ENCODE measurements at regions of chr12 and their contacts with region 1.

Region 1: DNA sequence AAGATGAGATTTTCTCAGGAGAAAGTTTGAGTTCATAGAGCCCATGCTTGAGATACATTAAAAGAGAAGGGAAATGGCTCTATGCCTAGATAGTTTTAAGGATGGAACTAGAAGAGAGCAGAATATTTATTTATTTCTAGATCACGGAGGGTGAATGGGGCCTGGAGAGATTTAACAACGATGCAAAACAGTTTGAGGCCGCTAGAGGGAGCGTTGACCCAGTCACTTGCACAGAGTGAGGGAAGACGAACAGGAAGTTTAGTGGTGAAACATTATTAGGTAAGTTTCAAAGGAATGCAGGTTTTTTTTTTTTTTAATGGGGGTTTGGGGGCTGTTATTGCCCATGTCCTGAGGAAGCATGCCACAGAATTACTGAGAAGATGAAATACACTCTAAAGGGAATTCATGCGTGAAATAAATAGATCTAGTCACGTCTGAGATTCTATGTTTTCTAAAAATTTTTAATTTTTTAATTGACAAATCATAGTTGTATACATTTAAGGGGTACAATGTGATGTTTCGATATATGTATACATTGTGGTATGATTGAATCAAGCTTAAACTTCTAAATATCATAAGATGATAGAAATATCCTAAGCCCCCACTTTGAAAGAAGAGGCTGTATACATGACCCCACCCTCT is 14.8 kb upstream of the PPP1R1A start:
- DNase-seq: peak; percentile 76
- H3K4me3 Mint-ChIP-seq: no peak overlapping the region
- H3K27ac Mint-ChIP-seq: no peak overlapping the region
- H3K4me1 Mint-ChIP-seq: peaks cover 8% of the 10 kb centered on the region
- H3K27me3 Mint-ChIP-seq: peaks cover 55% of the 10 kb centered on the region
- CTCF ChIP-seq: peak; percentile 59

Region 2: DNA sequence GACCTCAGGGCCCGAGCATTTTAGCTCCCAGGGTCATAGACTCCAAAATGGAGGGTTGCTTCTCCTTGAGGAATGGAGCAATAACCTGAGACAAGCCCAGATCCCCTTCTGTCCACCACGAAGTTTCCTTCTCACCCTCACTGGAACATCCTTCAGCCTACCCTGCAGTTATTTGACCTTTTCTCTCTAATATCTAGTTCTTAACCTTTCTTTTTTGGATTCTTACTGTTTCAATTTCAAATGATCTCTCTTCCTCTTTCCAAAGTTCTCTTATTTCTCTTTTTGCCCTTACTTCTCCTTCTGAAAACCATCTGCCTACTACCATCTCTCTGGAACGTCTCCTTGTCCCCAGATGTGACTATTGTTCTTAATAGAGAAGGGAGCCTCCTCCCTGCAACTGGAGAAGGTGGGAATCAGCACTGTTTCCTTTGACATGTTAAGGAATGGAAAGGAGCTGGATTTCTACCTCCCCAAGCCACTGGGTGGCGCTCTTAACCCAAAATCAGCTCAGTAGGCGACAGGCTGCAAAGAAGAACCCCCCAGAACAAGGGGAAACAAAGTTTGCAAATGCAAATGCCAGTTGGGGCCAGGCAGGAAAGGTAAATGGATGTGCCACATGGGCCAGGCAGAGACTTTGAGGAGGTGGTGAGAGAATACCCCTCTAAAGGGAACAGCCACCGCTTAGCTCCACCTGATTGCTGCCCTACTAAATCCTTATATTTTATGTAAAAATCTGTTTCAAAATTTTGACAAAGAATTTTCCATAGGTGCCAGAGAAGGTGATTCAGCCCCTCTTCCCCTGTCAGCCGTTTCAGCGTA is 76.3 kb before region 1 on chr12:
- CTCF ChIA-PET with region 1: no interaction called
- intact Hi-C with region 1: no loop called
- DNase-seq: peak; percentile 54
- H3K4me3 Mint-ChIP-seq: no peak overlapping the region
- H3K27ac Mint-ChIP-seq: no peak overlapping the region
- H3K4me1 Mint-ChIP-seq: no peaks in the 10 kb centered on the region
- H3K27me3 Mint-ChIP-seq: peaks cover 100% of the 10 kb centered on the region
- CTCF ChIP-seq: peak; percentile 36

Region 3: DNA sequence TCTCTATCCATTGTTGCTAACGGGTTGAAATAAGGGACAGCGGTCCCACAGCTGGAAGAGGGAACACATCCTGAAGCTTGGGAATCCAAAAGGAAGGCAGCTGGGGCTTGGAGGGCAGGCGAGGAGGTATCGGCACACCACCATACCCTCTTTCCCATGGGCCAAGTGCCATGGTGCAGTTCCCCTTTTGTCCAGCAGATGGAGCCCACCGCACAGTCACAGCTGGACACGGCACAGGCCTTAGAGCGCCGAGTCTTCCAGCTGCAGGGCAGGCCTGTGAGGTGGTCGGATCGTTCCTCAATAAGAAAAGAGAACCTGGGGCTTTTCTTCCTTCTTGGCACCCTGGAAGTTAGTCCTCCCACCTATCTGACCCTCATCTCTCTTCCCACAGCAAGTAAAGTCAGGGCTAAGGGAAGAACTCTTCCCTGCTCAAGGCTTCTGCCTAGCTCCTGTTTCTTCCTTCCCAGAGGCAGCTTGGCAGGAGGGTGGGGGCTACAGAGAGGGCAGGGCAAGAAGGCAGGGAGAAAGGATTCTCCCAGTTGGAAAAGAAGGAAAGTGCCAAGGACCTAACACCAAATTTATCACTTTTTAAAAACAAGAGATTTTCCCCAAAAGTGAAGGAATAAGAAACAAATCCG is 23.5 kb before region 1 on chr12:
- CTCF ChIA-PET with region 1: no interaction called
- intact Hi-C with region 1: loop called (anchors 2 kb)
- DNase-seq: peak; percentile 92
- H3K4me3 Mint-ChIP-seq: no peak overlapping the region
- H3K27ac Mint-ChIP-seq: no peak overlapping the region
- H3K4me1 Mint-ChIP-seq: no peaks in the 10 kb centered on the region
- H3K27me3 Mint-ChIP-seq: peaks cover 100% of the 10 kb centered on the region
- CTCF ChIP-seq: peak; percentile 99

Region 4: DNA sequence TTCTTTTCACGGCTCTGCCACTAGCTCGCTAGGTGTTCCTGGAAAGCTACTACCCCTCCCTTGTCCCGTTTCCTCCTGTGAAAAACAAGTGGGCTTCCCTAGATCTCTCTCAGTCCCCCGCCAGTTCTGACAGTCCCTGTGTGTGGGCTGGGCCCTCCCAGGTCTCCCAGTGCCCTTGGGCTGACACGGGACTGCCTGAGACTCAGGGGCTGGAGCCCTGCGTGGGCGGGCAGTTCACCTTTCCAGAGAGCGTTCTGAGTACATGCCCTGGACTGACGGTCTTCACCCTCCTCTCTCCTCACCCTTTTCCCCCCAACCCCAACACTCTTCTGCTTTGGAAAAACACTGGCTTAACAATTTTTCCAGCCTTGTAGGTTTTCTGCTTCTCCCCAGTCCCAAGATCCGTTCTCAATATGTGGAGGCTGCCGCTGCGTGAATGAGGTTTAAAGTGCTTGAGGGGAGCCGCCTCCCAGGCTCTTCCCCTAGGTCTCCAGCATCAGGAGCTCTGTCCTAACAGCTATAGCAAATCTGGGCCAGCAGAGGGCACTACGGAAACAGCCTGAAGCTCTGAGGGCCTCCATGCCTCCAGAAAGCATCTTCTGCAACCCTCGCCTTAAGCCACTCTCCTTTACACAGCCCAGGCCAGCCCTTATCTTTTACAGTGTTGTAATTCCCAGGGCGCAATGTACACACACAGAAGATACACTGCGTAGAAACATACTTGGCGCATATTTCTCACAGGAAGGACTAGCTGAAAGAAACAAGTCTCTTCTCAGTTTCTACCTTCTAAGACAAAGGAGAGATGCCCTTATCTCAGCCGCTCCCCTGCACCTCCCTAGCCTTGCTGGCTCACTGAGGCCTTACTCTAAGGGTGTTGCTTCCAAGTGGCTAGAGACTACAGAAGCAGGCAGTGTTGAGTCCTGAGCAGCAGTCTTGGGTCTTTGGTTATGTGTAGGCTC is 55.3 kb after region 1 on chr12:
- CTCF ChIA-PET with region 1: no interaction called
- intact Hi-C with region 1: no loop called
- DNase-seq: peak; percentile 59
- H3K4me3 Mint-ChIP-seq: no peak overlapping the region
- H3K27ac Mint-ChIP-seq: no peak overlapping the region
- H3K4me1 Mint-ChIP-seq: no peaks in the 10 kb centered on the region
- H3K27me3 Mint-ChIP-seq: peaks cover 70% of the 10 kb centered on the region
- CTCF ChIP-seq: peak; percentile 37